ENCODE measurements at regions of chr15 and their contacts with region 1.

Region 1: GRCh38 chr15:44308415-44308814 is 19.9 kb downstream of the GOLM2 start:
- DNase-seq: peak; percentile 49
- ATAC-seq: peak; percentile 89
- H3K4me3 Mint-ChIP-seq: peak overlapping the region; percentile 32
- H3K27ac Mint-ChIP-seq: peak overlapping the region; percentile 96
- H3K4me1 Mint-ChIP-seq: peaks cover 40% of the 10 kb centered on the region
- H3K27me3 Mint-ChIP-seq: no peaks in the 10 kb centered on the region
- CTCF ChIP-seq: no peak

Region 2: DNA sequence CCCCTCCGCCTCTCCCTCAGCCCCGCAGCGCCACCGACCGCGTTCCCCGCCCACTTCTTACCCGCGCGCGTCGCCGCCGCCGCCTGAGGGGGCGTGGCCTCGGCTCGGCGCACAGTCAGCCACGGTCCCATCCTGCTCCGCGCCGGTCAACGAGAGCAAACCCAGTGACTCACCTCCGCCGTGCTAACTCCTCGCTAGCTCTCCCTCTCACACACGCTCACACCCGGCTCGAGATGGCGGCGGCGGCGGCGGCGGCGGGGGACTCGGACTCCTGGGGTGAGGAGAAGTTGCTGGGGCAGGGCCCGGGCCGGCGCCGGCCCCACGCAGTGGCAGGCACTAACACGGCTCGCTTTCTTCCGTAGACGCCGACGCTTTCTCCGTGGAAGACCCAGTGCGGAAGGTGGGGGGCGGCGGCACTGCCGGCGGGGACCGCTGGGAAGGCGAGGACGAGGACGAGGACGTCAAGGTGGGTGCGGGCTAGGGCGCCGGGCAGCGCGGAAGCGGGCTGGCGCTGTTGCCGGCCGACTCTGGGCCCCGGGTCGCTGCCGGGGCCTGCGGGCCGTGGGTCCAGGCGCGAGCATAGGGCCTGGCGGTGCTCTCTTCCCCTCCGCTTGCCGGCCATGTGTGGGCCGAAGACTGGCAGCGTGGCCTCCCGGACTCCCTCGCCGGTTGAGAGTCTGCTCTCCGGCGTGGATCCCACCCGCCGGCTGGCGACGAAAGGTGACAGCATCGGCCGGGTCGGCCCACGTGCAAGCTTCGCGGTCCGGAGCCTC is 228.7 kb after region 1 on chr15 and contains the start of gene EIF3J:
- CTCF ChIA-PET with region 1: no interaction called
- POLR2A ChIA-PET with region 1: interaction called, 4 read pairs
- intact Hi-C with region 1: loop called (anchors 10 kb)
- DNase-seq: peak; percentile 95
- ATAC-seq: peak; percentile 93
- H3K4me3 Mint-ChIP-seq: peak within 1 kb of the TSS; percentile 87
- H3K27ac Mint-ChIP-seq: peak within 1 kb of the TSS; percentile 96
- H3K4me1 Mint-ChIP-seq: peaks cover 45% of the 10 kb centered on the region
- H3K27me3 Mint-ChIP-seq: no peaks in the 10 kb centered on the region
- CTCF ChIP-seq: no peak
- total RNA-seq, gene EIF3J: 109 to 112 TPM

Measured in activated CD8-positive, alpha-beta T cell treated with anti-CD3 and anti-CD28 coated beads for 36 hours (primary cell).